ENCODE measurements at regions of chr11 and their contacts with region 1.

Region 1: GRCh38 chr11:125371431-125371935 is 124.6 kb downstream of the FEZ1 start:
- DNase-seq: no peak
- H3K4me3 ChIP-seq: no peak overlapping the region
- H3K27ac ChIP-seq: no peak overlapping the region
- H3K4me1 ChIP-seq: no peaks in the 10 kb centered on the region
- H3K27me3 ChIP-seq: no peaks in the 10 kb centered on the region
- CTCF ChIP-seq: no peak
- POLR2A ChIP-seq: no peak

Region 2: DNA sequence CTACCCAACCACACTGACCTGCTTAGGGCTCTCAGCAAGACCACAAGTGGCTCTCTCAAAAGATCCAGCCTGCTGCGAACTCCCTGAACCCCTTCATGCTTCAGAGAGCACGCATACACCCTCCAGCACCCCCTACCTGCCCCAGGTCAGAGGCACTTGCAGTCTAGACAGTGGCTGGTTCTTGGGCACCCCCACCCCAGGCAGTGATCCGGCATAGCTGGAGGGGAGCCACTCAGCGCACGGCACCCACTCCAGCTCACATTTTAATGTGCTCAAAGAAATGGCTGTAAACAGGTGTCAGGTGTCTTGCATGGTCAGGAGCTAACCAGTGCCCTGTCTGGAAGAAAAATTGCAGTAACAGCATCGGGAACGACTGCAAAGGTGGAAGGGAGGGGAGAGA is 66.1 kb before region 1 on chr11:
- intact Hi-C with region 1: no loop called
- DNase-seq: no peak
- H3K4me3 ChIP-seq: no peak overlapping the region
- H3K27ac ChIP-seq: no peak overlapping the region
- H3K4me1 ChIP-seq: no peaks in the 10 kb centered on the region
- H3K27me3 ChIP-seq: no peaks in the 10 kb centered on the region
- CTCF ChIP-seq: no peak
- POLR2A ChIP-seq: no peak

Region 3: DNA sequence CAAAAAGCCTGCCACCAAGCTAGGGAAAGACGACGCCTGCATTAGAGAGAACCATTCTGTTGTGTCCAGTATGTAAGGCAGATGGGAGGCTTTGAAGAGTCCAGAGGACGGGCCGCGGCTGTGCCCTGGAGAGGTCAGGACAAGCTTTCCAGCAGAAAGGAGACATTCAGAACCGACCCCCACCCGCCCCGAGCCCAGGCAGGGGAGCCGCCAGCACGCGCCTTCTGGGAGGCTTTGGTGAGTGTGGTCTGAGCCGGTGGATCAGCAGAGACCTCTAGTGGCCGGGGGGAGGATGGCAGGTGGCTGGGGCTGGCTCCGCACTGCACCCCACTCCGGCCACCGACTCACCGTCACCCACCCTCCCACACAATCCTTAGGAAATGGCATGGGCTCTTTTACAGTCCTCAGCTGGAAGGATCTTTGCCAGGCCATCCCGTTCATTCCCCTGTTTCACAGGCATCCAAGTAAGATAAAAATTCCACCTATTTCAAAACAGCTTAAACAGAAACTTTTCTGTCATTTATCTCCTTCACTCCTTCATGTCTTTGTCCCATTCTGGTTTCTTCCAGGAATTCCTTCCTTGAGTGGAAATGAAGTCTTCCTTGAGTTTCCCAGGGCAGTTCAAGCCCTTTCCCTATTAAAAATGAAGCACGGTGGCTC is 33.4 kb after region 1 on chr11:
- intact Hi-C with region 1: loop called (anchors 2 kb)
- DNase-seq: peak; percentile 57
- H3K4me3 ChIP-seq: no peak overlapping the region
- H3K27ac ChIP-seq: peak overlapping the region; percentile 10 to 11
- H3K4me1 ChIP-seq: no peaks in the 10 kb centered on the region
- H3K27me3 ChIP-seq: no peaks in the 10 kb centered on the region
- CTCF ChIP-seq: peak; percentile 72 to 91 (median 86)
- POLR2A ChIP-seq: no peak

Measured in prostate gland (tissue), 2 donors.